ENCODE measurements at regions of chr5 and their contacts with region 1.

Region 1: DNA sequence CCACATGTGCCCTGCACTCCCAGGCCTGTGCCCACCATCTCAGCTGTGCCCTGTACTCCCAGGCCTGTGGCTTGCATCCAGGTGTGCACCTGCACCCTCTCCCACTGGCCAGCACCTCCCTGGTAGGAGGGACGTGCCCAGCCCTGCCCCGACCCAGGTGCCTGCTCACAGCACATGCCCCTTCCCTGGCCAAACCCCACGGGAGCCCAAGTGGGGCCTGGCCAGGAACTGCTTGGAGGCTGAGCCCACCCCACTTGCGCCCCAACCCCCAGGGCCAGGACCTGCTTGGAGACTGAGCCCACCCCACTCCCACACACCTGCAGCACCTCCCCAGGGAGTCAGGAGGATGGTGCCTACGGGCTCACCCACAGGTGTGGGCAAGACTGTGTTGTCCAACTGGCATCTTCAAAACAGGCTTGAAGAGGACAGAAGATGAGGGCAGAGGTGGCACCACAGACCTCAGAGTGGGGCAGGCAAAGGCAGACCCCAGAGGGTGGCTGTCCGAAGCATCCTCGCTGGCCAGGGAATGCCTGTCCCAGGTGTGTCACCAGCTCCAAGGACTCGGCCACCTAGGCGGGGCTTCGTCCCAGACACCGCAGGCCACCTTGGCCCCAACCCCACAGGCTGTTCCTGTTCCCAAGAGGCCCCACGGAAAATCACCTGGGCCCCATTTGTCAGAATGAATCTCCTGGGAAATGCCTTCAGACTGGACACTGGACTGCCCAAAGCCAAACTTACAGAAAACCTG is 10.8 kb downstream of the ZDHHC11B start:
- DNase-seq: peak; percentile 51
- ATAC-seq: no peak

Region 2: DNA sequence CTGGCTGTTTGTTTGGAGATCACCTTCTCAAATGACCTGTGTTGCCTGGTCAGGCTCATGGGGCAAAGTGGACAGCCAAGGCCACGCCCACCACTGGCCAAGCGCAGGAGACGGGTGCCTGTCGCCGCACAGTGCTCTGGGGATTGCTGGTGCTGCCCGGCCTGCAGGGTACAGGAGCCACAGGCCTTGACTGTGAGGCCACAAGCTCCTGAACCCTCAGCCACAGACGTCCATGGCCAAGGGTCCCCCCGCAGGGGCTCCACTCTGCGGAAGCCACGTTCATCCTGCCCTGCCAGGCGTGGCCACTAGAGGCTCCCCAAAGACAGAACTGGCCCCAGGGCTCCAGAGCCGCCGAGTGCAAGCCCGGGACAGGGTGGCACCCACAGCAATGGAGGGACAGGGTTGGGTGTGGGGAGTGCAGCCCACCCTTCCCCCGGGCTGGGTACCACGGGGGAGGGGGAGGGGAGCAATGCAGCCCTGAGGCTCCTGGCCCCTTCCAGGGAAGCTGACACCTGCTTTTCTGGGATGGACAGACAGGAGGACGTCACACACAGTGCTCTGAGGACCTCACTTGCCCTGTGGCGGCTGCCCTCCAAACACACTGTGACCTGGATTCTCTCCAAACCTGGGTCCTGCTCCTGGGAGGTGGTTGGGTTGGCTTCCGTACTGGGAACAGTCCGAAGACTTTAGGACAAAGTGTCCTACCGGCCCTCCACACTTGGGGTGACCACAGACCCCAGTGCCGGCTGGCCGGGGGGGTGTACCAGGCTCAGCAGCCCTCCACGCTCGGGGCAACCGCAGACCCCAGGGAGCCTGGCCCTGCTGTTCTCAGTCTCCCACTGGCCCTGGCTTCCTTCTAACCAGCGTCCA is 102.0 kb before region 1 on chr5:
- intact Hi-C with region 1: no loop called
- DNase-seq: peak; percentile 76
- ATAC-seq: peak; percentile 64

Region 3: DNA sequence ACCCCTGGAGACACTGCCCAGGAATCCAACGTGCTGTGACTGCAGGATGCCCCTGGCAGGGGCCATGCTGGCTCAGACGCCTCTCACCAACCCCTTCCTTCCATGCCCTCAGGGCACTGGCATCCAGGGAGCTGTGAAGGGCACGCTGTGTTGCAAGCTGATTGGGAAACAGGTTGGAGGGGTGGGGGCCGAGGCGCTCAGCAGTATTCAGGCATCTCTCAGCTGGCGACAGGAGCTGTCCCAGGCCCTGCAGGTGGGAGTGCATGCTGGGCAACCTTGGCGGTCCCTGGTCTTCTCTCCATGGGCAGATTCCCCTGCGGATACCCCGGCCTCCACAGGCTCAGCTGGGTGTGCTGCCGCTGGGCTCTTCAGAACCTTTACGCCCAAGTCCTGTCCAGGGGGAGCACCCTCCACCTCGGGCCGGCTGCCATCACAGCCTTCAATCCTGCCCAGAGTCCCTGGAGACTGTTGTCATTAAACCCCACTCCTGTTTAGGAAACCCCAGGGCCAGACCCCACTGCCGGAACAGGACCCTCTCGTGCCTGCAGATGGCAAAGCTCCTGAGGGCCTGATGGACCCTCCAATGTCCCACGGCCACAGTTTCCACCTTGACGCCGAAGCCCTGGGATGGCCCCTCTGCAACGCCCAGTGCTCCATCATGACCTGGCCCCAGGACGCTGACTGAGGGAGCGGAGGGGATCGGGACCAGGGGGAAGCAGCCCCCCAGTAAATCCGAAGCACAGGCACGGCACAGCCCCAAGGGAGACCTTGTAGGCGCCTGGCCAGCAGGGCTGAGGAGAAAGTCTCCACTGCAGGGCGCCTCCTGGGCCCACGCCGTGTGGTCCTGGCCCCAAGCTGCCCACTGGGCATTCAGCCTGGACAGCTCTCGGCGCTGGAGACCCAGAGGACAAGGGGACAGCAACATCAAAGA is 89.9 kb before region 1 on chr5:
- intact Hi-C with region 1: loop called (anchors 5 kb)
- DNase-seq: peak; percentile 61
- ATAC-seq: peak; percentile 53

Region 4: DNA sequence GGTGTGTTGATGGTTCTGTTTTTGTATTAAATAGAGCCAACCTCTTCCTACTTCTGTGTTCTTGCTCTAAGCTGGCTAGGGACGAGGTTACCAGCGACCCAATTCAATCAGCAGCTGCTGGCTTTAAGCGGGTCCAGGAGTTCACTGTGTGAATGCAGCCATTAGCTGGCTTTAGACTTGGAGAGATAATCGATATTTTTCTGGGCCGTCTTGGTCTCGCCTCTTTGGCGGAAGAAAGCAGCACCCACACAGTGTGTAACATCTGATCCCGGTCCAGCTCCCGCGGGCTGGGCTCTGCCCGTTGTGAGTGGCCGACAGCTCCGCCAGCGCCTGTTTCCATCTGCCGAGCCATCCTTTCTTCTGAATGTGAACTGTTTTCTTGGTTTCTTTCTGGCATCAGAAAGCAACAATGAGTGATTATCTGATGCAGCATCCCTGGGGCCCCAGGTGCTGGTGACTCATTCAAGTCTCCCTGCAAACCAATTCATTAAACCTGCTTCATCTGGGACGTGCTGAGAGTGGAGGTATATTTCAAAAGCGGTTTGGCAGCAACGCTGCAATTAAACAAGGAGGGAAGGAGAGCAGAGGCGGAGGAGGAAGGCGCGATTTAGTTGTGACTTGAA is 1199.8 kb after region 1 on chr5:
- intact Hi-C with region 1: no loop called
- DNase-seq: no peak
- ATAC-seq: no peak

Measured in Right ventricle myocardium inferior (tissue), 1 donor.